ENCODE measurements at regions of chr7 and their contacts with region 1.

Region 1: DNA sequence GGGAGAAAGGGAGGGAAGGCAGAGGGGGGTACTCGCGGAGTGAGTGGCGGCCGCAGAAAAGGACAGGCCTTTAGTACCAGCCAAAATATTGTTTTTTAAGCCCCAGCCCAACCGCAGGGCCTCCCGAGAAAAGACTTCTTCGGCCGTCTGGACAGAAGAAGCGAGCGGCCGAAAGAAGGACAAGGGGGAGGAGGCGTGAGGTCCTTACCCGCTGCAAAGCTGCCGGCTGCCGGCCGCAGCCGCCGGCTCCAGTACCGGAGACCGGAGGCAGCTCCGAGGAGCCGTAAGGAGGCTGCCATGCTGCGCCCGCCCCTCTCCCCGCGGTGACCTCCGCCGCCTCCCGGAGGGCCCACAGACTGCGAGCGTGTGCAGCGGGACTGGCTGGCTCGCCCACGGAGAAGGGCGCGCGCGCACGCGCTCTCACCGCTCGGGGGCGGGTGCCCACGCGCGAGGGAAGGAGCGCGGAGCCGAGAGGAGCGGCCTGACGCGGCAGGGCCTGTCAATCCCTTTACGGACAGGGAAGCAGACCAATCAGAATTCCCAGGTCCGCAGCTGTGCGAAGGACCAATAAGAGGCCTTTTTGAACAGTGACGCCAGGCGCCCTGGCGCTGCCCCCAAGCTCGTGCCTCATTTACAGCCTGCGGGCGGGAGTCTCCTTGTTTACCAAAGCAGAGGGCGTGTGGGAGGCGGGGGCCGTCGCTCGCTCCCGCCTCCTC is at the start of gene HIBADH:
- DNase-seq: peak; percentile 99
- H3K4me3 Mint-ChIP-seq: peak within 1 kb of the TSS; percentile 91
- H3K27ac Mint-ChIP-seq: peak within 1 kb of the TSS; percentile 82
- H3K4me1 Mint-ChIP-seq: peaks cover 13% of the 10 kb centered on the region
- H3K27me3 Mint-ChIP-seq: no peaks in the 10 kb centered on the region
- CTCF ChIP-seq: no peak
- total RNA-seq, gene HIBADH: 74.6 and 75.9 TPM in 2 replicates

Region 2: DNA sequence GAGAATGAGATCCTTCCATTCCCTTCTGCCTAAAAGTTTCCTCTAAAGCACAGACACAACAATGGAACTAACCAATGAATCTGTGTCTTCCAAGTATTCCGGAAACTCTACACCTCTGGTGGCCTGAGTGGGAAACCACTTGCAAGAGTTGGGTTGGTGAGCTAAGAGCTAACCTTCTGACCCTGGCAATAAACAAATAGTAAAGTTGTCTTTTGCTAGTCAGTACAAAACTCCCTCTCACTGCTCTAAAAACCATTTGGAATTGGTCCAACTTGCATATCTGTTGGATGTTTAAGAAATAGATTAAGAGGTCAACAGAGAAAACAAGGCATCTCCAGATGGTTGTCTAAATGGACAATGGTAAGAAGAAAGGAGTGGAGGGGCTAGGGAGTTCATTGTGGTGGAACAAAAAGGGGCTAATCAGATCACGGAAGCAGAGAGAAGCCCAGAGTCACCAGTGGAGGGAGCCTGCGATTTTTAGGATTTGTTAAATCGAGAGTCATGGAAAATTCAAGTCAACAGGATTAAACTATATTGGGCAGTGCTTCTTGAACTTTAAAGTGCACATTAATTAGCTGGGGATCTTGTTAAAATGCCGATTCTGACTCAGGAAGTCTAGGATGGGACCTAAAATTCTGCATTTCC is 227.8 kb before region 1 on chr7:
- CTCF ChIA-PET with region 1: no interaction called
- intact Hi-C with region 1: no loop called
- DNase-seq: no peak
- H3K4me3 Mint-ChIP-seq: no peak overlapping the region
- H3K27ac Mint-ChIP-seq: no peak overlapping the region
- H3K4me1 Mint-ChIP-seq: no peaks in the 10 kb centered on the region
- H3K27me3 Mint-ChIP-seq: no peaks in the 10 kb centered on the region
- CTCF ChIP-seq: no peak

Region 3: DNA sequence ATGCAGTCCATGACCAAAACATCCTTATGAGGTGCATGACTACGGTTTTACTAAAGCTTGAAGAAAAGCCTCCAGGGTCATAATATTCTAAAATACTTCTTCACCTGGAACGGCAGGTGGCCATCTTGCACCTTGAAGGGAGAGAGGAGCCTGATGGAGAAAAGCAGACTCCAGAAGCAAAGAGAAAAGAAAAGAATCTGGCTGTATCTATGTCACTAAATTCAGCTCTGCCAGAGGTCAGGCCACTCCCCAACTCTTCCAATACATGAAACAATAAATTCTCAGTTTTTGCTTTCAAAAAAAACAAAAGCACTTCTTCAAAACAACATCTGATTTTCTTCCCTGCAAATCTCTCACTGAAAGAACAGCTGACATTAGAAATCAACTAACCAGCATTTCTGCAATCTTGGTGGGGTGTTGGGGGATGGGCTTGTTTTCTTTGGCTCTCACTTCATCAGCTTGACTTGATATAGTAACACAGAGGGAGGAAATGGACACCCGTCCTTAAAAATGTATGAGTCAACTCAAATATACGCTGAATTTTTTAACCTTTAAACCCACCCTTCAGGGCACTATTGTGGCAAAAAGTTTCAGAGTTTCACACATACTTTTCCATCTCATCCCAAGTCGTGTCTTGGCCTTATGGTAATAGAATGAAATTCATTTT is 21.6 kb before region 1 on chr7:
- CTCF ChIA-PET with region 1: interaction called, 11 read pairs
- intact Hi-C with region 1: loop called (anchors 2 kb)
- DNase-seq: peak; percentile 88
- H3K4me3 Mint-ChIP-seq: peak overlapping the region; percentile 50
- H3K27ac Mint-ChIP-seq: peak overlapping the region; percentile 76
- H3K4me1 Mint-ChIP-seq: peaks cover 68% of the 10 kb centered on the region
- H3K27me3 Mint-ChIP-seq: no peaks in the 10 kb centered on the region
- CTCF ChIP-seq: no peak

Region 4: DNA sequence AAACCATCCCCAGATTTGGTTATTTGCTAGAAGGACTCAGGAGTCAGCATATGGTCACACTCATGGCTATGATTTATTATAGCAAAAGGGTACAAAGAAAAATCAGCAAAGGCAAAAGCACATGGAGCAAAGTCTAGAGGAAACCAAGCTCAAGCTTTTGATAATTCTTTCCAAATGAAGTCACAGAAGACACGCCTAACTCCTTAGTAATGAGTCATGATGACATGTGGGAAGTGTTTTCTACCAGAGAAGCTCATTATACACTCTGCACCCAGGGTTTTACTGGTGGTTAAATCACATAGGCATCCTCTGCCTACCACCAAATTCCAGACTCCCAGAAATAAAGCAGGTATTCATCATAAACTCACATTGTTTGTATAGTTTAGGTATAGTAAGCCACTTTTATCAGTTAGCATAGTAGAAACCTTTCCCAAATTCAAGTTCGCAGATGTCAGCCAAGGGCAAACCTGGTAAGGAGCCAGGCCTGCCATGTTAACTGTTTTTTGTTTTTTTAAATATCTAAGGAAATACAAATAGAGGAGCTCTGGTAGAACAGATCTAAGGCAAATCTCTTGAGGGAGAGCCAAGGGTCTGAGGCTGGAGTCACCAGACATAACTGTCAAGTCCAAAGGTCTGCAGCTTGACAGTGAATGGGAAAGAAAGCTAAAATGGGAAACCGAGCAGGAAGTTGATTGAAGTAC is 15.4 kb after region 1 on chr7:
- CTCF ChIA-PET with region 1: interaction called, 18 read pairs
- intact Hi-C with region 1: no loop called
- DNase-seq: peak; percentile 67
- H3K4me3 Mint-ChIP-seq: peak overlapping the region; percentile 55
- H3K27ac Mint-ChIP-seq: peak overlapping the region; percentile 100
- H3K4me1 Mint-ChIP-seq: peaks cover 42% of the 10 kb centered on the region
- H3K27me3 Mint-ChIP-seq: no peaks in the 10 kb centered on the region
- CTCF ChIP-seq: no peak

Region 5: DNA sequence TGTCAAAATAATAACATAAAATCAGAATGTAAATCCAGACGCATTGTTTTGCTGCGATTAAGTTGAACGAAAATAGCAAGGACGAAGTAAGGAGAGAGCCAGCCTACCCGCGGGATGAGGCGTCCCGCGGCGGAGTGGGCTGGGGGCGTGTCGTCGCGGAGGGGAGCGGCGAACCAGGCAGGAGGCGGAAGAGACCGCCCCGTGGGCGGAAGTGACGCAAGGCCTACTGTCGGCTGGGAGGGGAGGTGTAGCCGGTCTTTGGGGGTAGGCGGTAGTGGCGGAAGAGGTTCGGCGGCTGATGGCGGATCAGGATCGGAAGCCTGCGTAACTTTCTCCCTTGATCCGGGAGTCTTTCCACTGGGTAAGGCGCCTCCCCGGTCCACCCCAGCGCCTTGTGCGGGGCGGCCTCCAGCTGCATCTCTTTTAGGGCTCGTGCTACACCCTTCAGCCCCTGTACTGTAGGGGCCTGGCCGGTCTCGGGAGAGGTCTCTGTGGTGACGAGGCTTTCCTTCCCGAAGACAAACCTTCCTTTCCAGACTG is 77.3 kb after region 1 on chr7 and contains the start of gene TAX1BP1:
- CTCF ChIA-PET with region 1: interaction called, 5 read pairs
- intact Hi-C with region 1: loop called (anchors 1 kb)
- DNase-seq: peak; percentile 99
- H3K4me3 Mint-ChIP-seq: peak within 1 kb of the TSS; percentile 95
- H3K27ac Mint-ChIP-seq: peak within 1 kb of the TSS; percentile 89
- H3K4me1 Mint-ChIP-seq: peaks cover 52% of the 10 kb centered on the region
- H3K27me3 Mint-ChIP-seq: no peaks in the 10 kb centered on the region
- CTCF ChIP-seq: no peak
- total RNA-seq, gene TAX1BP1: 190 TPM in 2 replicates